ENCODE measurements at regions of chr12 and their contacts with region 1.

Region 1: GRCh38 chr12:130970165-130970907 is 16.6 kb downstream of the ADGRD1 start:
- DNase-seq: peak; percentile 68
- ATAC-seq: peak; percentile 94
- H3K4me3 ChIP-seq: 0 out of 2 replicates have a peak overlapping the region, but pooled peaks have one; percentile 35
- H3K27ac ChIP-seq: no peak overlapping the region
- H3K4me1 ChIP-seq: peaks cover 5% of the 10 kb centered on the region; the same call in 1 of the 2 replicates
- H3K27me3 ChIP-seq: no peaks in the 10 kb centered on the region
- CTCF ChIP-seq: no peak
- EP300 ChIP-seq: peak in 1 of 2 experiments; percentile 55; a peak in 1 of 4 replicates
- POLR2A ChIP-seq: no peak
- RAD21 ChIP-seq: no peak

Region 2: DNA sequence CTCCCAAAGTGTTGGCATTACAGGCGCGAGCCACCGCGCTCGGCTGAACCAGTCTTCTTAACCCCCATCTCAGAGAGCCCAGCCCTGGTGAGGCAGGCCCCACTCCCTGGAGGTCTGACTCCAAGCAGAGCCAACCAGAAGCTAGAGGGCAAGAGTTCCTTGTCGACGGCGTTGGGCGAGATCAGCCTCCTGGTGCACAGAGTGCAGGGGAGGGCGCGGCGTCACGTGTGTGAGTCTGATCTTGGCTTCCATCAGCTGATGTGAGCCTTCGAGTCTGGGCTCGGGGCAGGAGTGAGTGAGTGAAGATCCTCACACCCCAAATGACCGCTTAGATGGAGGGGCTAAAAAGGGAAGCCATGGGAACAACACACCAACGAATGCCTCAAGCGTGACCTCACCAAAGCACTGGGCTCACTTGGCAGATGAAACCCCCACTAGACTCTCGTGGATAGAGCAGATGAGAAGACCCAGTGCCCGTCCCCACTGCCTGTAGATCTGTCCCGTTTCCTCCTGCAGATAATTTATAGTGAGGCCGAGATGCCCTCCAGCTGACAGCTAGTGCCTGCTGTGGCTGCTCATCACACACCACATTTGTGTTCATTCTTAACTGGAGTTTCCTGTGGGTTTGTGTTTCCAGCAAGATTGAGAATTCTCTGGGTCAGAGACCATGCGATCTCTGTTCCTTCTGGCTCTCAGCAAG is 45.2 kb before region 1 on chr12:
- CTCF ChIA-PET with region 1: no interaction called
- POLR2A ChIA-PET with region 1: interaction called, 13 read pairs
- RAD21 ChIA-PET with region 1: no interaction called
- SMC1A ChIA-PET with region 1: interaction called, 3 read pairs
- in situ Hi-C with region 1: no loop called
- intact Hi-C with region 1: no loop called
- DNase-seq: no peak
- ATAC-seq: no peak
- H3K4me3 ChIP-seq: no peak overlapping the region
- H3K27ac ChIP-seq: no peak overlapping the region
- H3K4me1 ChIP-seq: no peaks in the 10 kb centered on the region
- H3K27me3 ChIP-seq: no peaks in the 10 kb centered on the region; a peak in 1 of 4 replicates
- CTCF ChIP-seq: no peak
- EP300 ChIP-seq: no peak
- POLR2A ChIP-seq: no peak
- RAD21 ChIP-seq: no peak

Region 3: DNA sequence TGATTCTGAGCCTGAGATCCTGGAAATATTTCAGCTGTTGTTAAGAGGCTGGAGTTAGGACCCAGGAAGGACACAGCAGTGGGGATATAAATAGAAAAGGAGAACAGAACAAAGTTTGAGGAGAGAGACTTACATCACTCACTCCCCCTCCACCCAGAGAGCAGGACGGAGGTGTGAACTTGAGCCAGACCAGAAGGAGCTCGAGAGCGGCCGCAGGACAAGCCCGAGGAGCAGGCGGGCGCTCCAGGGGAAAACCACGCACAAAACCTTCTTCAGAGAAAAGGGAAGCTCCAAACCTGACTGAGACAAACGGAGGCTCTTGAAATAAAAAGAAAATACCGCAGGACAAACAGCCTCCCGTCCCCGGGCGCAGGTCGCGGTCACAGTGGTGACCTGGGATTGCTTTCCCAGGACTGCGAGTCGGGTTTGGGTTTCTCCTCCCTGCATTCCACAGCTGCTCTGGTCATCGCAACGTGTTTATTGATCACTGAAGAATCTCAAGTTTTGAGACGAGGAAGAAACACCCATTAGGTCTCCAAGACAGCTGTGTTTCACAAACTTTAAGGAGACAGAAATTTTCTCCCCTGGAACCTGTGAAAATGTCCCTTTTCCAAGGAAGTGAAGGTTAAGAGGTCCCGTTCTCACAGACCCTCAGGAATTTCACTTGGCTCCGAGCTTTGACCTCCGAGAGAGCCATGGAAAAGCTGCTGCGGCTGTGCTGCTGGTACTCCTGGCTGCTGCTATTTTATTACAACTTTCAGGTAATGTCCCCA is 16.4 kb before region 1 on chr12 and contains the start of gene ADGRD1:
- CTCF ChIA-PET with region 1: interaction called, 11 read pairs
- POLR2A ChIA-PET with region 1: interaction called, 4 read pairs
- RAD21 ChIA-PET with region 1: interaction called, 11 read pairs
- SMC1A ChIA-PET with region 1: interaction called, 23 read pairs
- in situ Hi-C with region 1: no loop called
- intact Hi-C with region 1: no loop called
- DNase-seq: no peak
- ATAC-seq: peak; percentile 79
- H3K4me3 ChIP-seq: 0 out of 2 replicates have a peak within 1 kb of the TSS, but pooled peaks have one; percentile 18
- H3K27ac ChIP-seq: no peak within 1 kb of the TSS
- H3K4me1 ChIP-seq: peaks cover 4% of the 10 kb centered on the region; the same call in 1 of the 2 replicates
- H3K27me3 ChIP-seq: no peaks in the 10 kb centered on the region
- CTCF ChIP-seq: no peak
- EP300 ChIP-seq: no peak
- POLR2A ChIP-seq: no peak
- RAD21 ChIP-seq: no peak
- polyA plus RNA-seq, gene ADGRD1: 0.15 to 0.60 TPM

Measured in GM12878 (cell line).